CD8-positive, alpha-beta memory T cell (primary cell): ENCODE measurements at regions of chr2 and their contacts with region 1.

Region 1: DNA sequence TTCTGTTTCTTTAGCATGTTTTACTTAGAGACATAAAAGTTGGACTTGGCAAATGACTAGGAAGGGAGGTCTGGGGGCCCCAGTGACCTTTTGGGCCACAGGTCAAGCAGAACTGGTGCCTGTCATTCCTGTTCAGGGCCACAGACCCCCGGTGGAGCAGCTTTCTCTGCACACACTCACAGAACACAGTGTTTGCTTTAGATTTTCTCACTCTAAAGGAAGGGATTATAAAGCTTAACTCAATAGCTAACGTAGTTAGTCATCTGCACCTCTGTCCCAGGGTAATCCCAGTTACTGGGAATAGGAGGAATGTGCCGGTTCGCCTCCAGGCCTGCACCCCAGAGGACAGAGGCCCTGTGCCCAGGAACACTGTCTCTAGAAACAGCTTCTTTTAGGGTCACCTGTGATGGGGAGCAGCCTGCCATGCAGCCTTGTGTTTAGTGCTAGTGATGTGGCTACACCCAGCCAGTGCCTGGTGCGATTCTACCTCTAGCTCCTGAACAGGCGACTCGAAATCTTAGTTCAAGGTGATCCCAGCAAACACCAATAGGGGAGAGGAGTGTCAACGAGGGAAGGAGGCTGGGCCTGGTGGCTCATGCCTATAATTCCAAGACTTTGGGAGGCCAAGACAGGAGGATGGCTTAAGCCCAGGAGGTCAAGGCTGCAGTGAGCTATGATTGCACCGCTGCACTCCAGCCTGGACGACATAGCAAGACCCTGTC is 11.5 kb downstream of the SPATA3 start:
- DNase-seq: no peak
- H3K4me3 ChIP-seq: no peak overlapping the region
- H3K4me3 Mint-ChIP-seq: no peak overlapping the region
- H3K27ac ChIP-seq: no peak overlapping the region
- H3K27ac Mint-ChIP-seq: no peak overlapping the region
- H3K4me1 ChIP-seq: no peaks in the 10 kb centered on the region
- H3K4me1 Mint-ChIP-seq: peaks cover 0 to 5% (median 2%) of the 10 kb centered on the region in 3 donors
- H3K27me3 ChIP-seq: no peaks in the 10 kb centered on the region
- H3K27me3 Mint-ChIP-seq: peaks cover 9 to 10% of the 10 kb centered on the region in 2 donors

Region 2: GRCh38 chr2:230772156-230772555 is 235.3 kb before region 1 on chr2:
- CTCF ChIA-PET with region 1: no interaction called
- POLR2A ChIA-PET with region 1: interaction called, 10 read pairs
- DNase-seq: no peak
- H3K4me3 ChIP-seq: no peak overlapping the region
- H3K4me3 Mint-ChIP-seq: peak overlapping the region in 1 of 7 donors; percentile 33
- H3K27ac ChIP-seq: no peak overlapping the region
- H3K27ac Mint-ChIP-seq: peak overlapping the region in 4 of 8 donors; percentile 2 to 46 (median 32)
- H3K4me1 ChIP-seq: peaks cover 50% of the 10 kb centered on the region
- H3K4me1 Mint-ChIP-seq: peaks cover 77 to 93% (median 92%) of the 10 kb centered on the region in 3 donors
- H3K27me3 ChIP-seq: no peaks in the 10 kb centered on the region
- H3K27me3 Mint-ChIP-seq: no peaks in the 10 kb centered on the region

Region 3: GRCh38 chr2:230956827-230957755 is 50.4 kb before region 1 on chr2:
- CTCF ChIA-PET with region 1: no interaction called
- POLR2A ChIA-PET with region 1: no interaction called
- DNase-seq: peak in 2 of 5 donors; percentile 20 to 24
- H3K4me3 ChIP-seq: peak overlapping the region; percentile 46
- H3K4me3 Mint-ChIP-seq: peak overlapping the region; percentile 83 to 92 (median 88)
- H3K27ac ChIP-seq: no peak overlapping the region
- H3K27ac Mint-ChIP-seq: peak overlapping the region in 5 of 8 donors; percentile 39 to 85 (median 82)
- H3K4me1 ChIP-seq: peaks cover 11% of the 10 kb centered on the region
- H3K4me1 Mint-ChIP-seq: peaks cover 12 to 15% (median 15%) of the 10 kb centered on the region in 3 donors
- H3K27me3 ChIP-seq: peaks cover 27% of the 10 kb centered on the region
- H3K27me3 Mint-ChIP-seq: peaks cover 20 to 52% of the 10 kb centered on the region in 2 donors